GM12878 (cell line): ENCODE measurements at regions of chr1 and their contacts with region 1.

Region 1: GRCh38 chr1:85707990-85708828 is at the start of gene ZNHIT6:
- DNase-seq: peak; percentile 82
- ATAC-seq: peak; percentile 92
- H3K4me3 ChIP-seq: peak within 1 kb of the TSS; percentile 89
- H3K27ac ChIP-seq: peak within 1 kb of the TSS; percentile 69
- H3K4me1 ChIP-seq: no peaks in the 10 kb centered on the region
- H3K27me3 ChIP-seq: no peaks in the 10 kb centered on the region
- CTCF ChIP-seq: peak; percentile 3 to 46 (median 38); a peak in 3 of 6 replicates
- EP300 ChIP-seq: no peak; a peak in 1 of 4 replicates
- POLR2A ChIP-seq: peak; percentile 84
- RAD21 ChIP-seq: 0 out of 2 replicates have a peak, but pooled peaks have one; percentile 18
- polyA plus RNA-seq, gene ZNHIT6: 14.3 to 20.2 TPM

Region 2: GRCh38 chr1:85692730-85693314 is 15.4 kb before region 1 on chr1:
- CTCF ChIA-PET with region 1: interaction called, 12 read pairs
- POLR2A ChIA-PET with region 1: interaction called, 3 read pairs
- RAD21 ChIA-PET with region 1: no interaction called
- SMC1A ChIA-PET with region 1: interaction called, 3 read pairs
- in situ Hi-C with region 1: no loop called
- intact Hi-C with region 1: no loop called
- DNase-seq: no peak
- ATAC-seq: no peak
- H3K4me3 ChIP-seq: no peak overlapping the region
- H3K27ac ChIP-seq: no peak overlapping the region
- H3K4me1 ChIP-seq: no peaks in the 10 kb centered on the region
- H3K27me3 ChIP-seq: no peaks in the 10 kb centered on the region
- CTCF ChIP-seq: peak in 1 of 3 experiments; percentile 10; a peak in 1 of 6 replicates
- EP300 ChIP-seq: no peak
- POLR2A ChIP-seq: no peak
- RAD21 ChIP-seq: no peak

Region 3: GRCh38 chr1:85756864-85757263 is 48.7 kb after region 1 on chr1:
- CTCF ChIA-PET with region 1: no interaction called
- POLR2A ChIA-PET with region 1: no interaction called
- RAD21 ChIA-PET with region 1: no interaction called
- SMC1A ChIA-PET with region 1: no interaction called
- in situ Hi-C with region 1: no loop called
- intact Hi-C with region 1: no loop called
- DNase-seq: no peak
- ATAC-seq: peak; percentile 94
- H3K4me3 ChIP-seq: no peak overlapping the region
- H3K27ac ChIP-seq: no peak overlapping the region
- H3K4me1 ChIP-seq: no peaks in the 10 kb centered on the region
- H3K27me3 ChIP-seq: no peaks in the 10 kb centered on the region
- CTCF ChIP-seq: no peak
- EP300 ChIP-seq: no peak
- POLR2A ChIP-seq: no peak
- RAD21 ChIP-seq: no peak